HEK293 (cell line): ENCODE measurements at regions of chr9 and their contacts with region 1.

Region 1: GRCh38 chr9:36190388-36191287 is at the start of gene CLTA:
- H3K4me3 ChIP-seq: peak within 1 kb of the TSS; percentile 93
- H3K27ac ChIP-seq: peak within 1 kb of the TSS; percentile 84; the same call in 1 of the 2 replicates
- H3K4me1 ChIP-seq: 0 out of 2 replicates have a peak, but pooled peaks cover 6% of the 10 kb centered on the region
- CTCF ChIP-seq: peak; percentile 34; the same call in 1 of the 2 replicates

Region 2: GRCh38 chr9:36121971-36122370 is 68.7 kb before region 1 on chr9:
- CTCF ChIA-PET with region 1: no interaction called
- POLR2A ChIA-PET with region 1: no interaction called
- H3K4me3 ChIP-seq: no peak overlapping the region
- H3K27ac ChIP-seq: no peak overlapping the region
- H3K4me1 ChIP-seq: no peaks in the 10 kb centered on the region
- CTCF ChIP-seq: no peak

Region 3: DNA sequence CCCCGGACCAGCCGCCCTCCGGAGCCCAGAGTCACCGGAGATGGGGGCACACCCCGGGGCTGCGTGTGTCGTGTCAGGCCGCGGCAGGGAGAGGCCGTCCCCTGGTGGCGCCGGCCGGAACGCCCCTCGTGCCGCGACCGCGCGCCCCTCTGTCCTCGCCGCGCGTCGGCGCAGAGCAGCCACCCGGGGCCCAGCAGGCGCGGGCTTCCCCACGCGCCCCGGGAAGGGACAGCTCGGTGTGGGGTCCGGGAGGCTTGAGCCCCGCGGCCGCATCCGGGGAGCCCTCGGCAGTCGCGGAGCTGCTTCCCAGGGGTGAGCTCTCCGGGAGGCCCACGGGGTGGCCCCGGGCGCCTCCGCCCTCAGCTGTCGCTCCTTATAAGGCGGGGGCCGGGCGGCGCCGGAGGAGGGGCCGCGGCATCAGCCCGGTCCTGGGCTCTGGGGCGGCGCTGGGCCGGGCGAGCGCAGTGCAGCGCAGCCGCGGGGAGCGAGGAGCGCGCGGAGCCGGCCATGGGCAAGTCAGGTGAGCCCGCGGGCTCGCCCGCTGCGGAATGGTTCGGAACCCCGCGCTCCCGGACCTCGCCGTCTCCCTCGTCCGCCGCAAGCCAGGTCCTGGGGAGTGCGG is 54.3 kb before region 1 on chr9 and contains the start of gene GLIPR2:
- CTCF ChIA-PET with region 1: interaction called, 5 read pairs
- POLR2A ChIA-PET with region 1: interaction called, 18 read pairs
- H3K4me3 ChIP-seq: peak within 1 kb of the TSS; percentile 62
- H3K27ac ChIP-seq: peak within 1 kb of the TSS; percentile 56; the same call in 1 of the 2 replicates
- H3K4me1 ChIP-seq: no peaks in the 10 kb centered on the region
- CTCF ChIP-seq: peak; percentile 40; the same call in 1 of the 2 replicates

Region 4: DNA sequence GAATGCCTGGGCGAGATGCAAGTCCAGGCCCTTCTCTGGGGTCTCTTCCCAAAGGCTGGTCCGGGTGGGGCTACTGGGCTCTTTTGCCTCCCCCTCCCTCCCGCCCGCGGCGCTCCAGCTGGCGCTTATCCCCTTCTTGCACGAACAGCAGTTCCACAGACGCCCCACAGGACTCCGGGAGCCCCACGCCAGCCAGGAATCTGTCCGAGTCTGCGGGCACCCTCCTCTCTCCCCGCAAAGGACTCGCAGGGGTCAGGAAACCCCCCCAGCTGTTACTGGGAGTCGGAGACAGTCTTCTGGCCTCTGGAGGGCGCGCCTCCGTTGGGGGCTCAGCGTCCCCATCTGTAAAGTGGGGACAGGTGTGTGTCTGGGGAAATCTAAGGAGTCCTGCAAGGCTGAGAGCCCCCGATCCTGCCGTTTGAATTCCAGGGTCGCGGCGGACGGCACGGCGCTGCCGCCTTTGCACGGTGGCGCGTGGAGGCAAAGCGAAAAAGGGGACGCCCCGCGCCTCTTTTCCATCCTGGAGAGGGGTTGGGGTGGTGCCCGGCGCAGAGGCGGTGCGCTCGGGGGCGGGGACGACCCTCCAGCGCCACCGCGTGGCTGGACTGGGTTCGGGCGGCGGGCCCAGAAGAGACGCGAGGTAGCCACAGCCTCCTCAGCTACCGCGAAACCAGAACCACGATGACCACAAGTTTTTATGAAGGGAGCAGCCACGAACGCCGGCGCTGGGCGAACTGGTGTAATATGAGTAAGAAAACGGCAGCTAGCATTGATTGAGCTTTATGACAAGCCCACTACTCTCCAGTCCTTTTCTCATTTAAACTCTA is 24.3 kb before region 1 on chr9:
- CTCF ChIA-PET with region 1: interaction called, 28 read pairs
- POLR2A ChIA-PET with region 1: interaction called, 30 read pairs
- H3K4me3 ChIP-seq: peak overlapping the region; percentile 21; the same call in 1 of the 2 replicates
- H3K27ac ChIP-seq: no peak overlapping the region
- H3K4me1 ChIP-seq: peaks cover 4% of the 10 kb centered on the region; the same call in 1 of the 2 replicates
- CTCF ChIP-seq: peak; percentile 83

Region 5: GRCh38 chr9:36204906-36205547 is 14.4 kb after region 1 on chr9:
- CTCF ChIA-PET with region 1: interaction called, 27 read pairs
- POLR2A ChIA-PET with region 1: interaction called, 17 read pairs
- H3K4me3 ChIP-seq: no peak overlapping the region
- H3K27ac ChIP-seq: no peak overlapping the region
- H3K4me1 ChIP-seq: no peaks in the 10 kb centered on the region
- CTCF ChIP-seq: no peak

Region 6: DNA sequence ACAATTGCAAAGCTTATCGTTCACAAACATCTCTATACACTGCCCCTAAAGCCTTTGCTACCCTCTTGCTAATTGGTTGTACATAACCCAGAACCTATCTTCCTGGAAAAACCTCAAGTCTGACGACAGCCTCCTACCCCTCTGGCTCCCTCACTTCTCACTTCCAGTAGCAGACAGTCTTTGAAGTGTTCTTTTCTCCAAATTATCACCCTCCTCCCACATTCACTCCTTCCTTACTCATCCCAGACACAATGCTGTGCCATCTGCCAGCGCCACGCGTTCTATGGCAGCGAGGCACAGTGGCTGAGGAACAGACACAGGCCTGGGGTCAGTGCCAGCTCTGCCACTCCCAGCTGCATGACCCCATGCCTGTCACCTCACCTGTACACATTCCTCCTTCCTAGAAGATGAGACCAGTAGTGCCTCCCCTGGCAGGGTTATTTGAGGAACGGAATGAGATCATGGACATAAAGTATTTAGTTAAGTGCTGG is 27.8 kb after region 1 on chr9:
- CTCF ChIA-PET with region 1: no interaction called
- POLR2A ChIA-PET with region 1: no interaction called
- H3K4me3 ChIP-seq: no peak overlapping the region
- H3K27ac ChIP-seq: no peak overlapping the region
- H3K4me1 ChIP-seq: no peaks in the 10 kb centered on the region
- CTCF ChIP-seq: no peak

Region 7: GRCh38 chr9:36328798-36329411 is 138.3 kb after region 1 on chr9:
- CTCF ChIA-PET with region 1: interaction called, 13 read pairs
- POLR2A ChIA-PET with region 1: interaction called, 3 read pairs
- H3K4me3 ChIP-seq: no peak overlapping the region
- H3K27ac ChIP-seq: no peak overlapping the region
- H3K4me1 ChIP-seq: no peaks in the 10 kb centered on the region
- CTCF ChIP-seq: peak; percentile 20; the same call in 1 of the 2 replicates

Region 8: DNA sequence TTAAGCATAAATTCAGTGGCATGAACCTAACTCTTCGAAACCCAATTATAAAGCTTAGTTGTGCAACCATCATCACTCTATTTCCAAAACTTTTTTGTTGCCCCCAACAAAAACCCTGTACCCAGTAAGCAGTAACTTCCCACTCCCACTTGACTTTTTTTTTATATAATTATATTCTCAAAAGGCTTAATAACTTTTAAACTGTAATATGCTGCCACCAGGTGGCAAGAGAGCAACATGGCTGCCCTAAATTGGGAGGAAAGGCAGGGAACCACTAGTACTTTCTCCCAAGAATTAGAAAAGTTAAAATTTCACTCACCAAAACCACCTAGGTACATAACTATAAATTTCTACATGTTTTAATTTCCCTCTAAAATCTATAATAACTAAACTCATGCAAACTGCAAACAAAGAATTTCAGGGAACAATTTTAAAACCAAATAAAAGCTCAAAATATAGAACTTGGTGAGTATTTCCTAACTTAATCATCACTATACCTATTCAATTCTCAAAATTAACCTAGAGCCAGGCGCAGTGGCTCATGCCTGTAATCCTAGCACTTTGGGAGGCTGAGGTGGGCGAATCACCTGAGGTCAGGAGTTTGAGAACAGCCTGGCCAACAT is 259.6 kb after region 1 on chr9:
- CTCF ChIA-PET with region 1: no interaction called
- POLR2A ChIA-PET with region 1: no interaction called
- H3K4me3 ChIP-seq: no peak overlapping the region
- H3K27ac ChIP-seq: no peak overlapping the region
- H3K4me1 ChIP-seq: no peaks in the 10 kb centered on the region
- CTCF ChIP-seq: no peak

Region 9: DNA sequence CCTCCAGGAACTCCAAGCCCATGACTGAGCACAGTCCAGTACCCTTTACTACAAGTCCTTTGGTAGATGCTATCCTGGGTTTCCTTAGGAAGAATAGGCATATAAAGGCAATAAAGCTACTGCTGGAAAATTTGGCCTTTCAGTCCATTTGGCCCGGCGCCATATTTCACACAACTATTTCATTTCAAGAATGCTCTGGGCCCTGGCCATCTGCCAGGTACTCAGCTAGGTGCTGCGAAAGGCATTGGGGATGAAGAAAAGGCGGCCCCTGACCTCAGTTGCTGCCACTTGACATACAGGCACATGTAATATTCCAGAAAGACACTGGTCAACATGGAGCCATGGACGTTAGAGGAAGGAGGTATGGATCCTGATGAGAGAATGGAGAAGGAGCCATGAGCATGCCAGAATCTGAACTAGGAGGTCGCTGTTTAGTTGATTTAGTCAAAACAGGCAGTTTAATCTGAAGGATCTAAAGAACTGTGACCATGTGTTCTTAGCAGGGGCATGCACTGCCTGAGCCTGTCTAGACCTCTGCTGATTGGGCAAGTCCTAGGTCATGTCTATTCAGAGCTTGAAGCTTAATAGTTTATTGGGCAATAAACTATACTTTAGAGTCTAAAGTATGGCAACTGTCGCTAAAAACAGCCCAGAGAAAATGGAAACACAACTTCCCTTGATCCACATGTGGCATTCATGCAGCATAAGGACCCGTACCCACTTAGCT is 531.4 kb after region 1 on chr9:
- CTCF ChIA-PET with region 1: no interaction called
- POLR2A ChIA-PET with region 1: no interaction called
- H3K4me3 ChIP-seq: no peak overlapping the region
- H3K27ac ChIP-seq: no peak overlapping the region
- H3K4me1 ChIP-seq: no peaks in the 10 kb centered on the region
- CTCF ChIP-seq: no peak